ENCODE measurements at regions of chr12 and their contacts with region 1.

Region 1: DNA sequence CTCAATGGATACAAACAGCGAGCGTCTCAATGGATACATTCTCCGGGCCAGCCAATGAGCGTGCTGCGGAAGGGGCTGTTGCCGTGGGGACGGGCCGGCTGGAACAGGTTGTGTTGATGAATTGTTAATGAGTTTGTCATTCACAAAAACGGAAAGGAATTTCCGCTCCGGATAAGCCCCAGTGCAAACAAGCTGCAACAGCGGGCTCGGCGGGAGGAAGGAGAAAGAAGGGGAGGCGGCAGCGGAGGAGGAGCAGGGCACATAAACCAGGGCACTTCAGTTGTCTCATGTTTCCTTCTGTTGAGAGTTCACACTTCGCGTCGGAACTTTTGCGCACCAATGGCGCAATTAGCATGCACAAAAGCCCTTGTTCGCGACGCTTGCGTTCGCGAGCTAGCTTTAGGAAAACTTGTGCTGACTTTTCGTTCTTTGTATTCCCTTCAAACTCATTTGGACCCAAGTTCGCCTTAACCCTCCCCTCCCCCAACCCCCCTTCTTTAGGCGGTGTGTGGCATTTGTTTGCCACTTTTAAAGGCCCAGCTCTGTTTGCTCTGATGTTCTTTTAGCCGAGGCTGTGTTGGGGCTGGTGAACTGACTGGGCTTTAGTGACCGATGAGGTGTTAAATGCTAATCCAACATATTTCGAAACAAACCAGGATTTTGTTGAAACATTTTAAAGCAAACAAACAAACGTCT is at the start of gene DUSP6:
- DNase-seq: peak; percentile 98
- H3K4me3 Mint-ChIP-seq: peak within 1 kb of the TSS; percentile 98
- H3K27ac Mint-ChIP-seq: peak within 1 kb of the TSS; percentile 93
- H3K4me1 Mint-ChIP-seq: peaks cover 44% of the 10 kb centered on the region
- H3K27me3 Mint-ChIP-seq: no peaks in the 10 kb centered on the region
- total RNA-seq, gene DUSP6: 95.5 and 96.7 TPM in 2 replicates

Region 2: GRCh38 chr12:89051065-89051677 is 301.5 kb before region 1 on chr12:
- intact Hi-C with region 1: loop called (anchors 1 kb)
- DNase-seq: peak; percentile 82
- H3K4me3 Mint-ChIP-seq: no peak overlapping the region
- H3K27ac Mint-ChIP-seq: no peak overlapping the region
- H3K4me1 Mint-ChIP-seq: peaks cover 24% of the 10 kb centered on the region
- H3K27me3 Mint-ChIP-seq: no peaks in the 10 kb centered on the region

Region 3: DNA sequence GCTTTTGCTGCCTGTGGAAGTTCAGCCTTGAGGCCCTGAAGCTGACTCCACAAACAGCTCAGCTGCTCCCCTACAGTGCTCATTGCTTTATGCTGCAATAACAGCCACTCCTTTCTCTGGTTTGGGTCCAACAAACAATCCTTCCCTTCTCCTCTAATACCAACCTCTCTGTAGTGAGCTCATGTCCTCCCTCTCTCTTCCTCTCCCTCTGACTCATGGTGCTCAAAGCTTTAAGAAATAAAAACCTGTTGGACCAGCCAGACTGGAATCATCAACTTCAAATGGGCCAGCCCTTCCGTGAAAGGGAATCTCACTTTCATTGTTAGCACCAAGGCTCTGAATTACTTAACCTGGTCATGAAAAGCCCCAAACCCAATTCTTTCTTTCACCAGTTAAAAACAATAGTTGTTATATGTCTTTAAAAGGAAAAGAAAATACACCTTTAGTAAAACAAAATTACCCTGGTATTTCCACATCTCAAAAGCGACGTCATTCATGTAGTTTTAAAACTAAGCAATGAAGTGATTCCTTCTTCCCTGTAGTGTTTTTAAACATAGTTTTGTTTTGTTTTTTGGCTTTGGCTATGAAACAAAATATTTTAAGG is 126.7 kb before region 1 on chr12:
- intact Hi-C with region 1: loop called (anchors 1 kb)
- DNase-seq: peak; percentile 75
- H3K4me3 Mint-ChIP-seq: peak overlapping the region; percentile 58
- H3K27ac Mint-ChIP-seq: peak overlapping the region; percentile 95
- H3K4me1 Mint-ChIP-seq: peaks cover 67% of the 10 kb centered on the region
- H3K27me3 Mint-ChIP-seq: no peaks in the 10 kb centered on the region

Region 4: GRCh38 chr12:89250636-89251035 is 102.0 kb before region 1 on chr12:
- intact Hi-C with region 1: no loop called
- DNase-seq: no peak
- H3K4me3 Mint-ChIP-seq: no peak overlapping the region
- H3K27ac Mint-ChIP-seq: no peak overlapping the region
- H3K4me1 Mint-ChIP-seq: peaks cover 37% of the 10 kb centered on the region
- H3K27me3 Mint-ChIP-seq: no peaks in the 10 kb centered on the region

Region 5: GRCh38 chr12:89373763-89374572 is 21.3 kb after region 1 on chr12:
- intact Hi-C with region 1: loop called (anchors 1 kb)
- DNase-seq: no peak
- H3K4me3 Mint-ChIP-seq: no peak overlapping the region
- H3K27ac Mint-ChIP-seq: no peak overlapping the region
- H3K4me1 Mint-ChIP-seq: peaks cover 38% of the 10 kb centered on the region
- H3K27me3 Mint-ChIP-seq: no peaks in the 10 kb centered on the region

Region 6: DNA sequence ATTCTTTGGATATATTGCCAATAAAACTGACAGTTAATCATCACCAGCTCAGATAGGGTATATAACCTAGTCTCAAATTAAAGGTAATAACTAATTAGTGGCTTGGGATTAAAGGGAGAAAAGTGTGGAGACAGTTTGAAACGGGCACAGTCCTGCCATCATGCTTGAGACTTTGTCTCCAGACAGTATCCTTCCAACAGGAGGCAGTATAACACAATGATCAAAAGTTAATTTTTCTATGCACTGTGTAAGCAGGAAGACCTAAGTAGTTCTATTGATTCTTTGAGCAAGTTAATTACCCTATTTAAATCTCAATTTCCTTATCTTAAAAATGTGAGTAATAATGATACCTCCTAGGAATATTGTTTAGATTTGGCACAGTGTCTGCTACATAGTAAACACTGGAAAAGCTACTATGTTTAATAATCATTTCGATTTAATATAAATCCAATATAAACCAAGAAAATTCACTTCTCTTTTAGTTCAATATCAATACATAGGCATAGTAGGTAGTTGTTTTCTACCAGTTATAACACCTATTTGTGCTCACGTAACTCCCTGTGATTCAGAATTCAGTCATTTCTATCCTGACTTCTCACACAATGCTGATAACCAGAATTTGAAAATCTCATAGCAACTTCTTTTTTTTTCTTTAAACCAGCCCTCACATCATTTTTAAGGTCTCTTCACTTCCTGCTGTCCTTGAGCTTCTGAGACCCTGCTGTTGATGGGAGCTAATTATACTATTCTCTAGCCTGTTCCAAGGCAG is 118.3 kb after region 1 on chr12:
- intact Hi-C with region 1: loop called (anchors 2 kb)
- DNase-seq: peak; percentile 73
- H3K4me3 Mint-ChIP-seq: no peak overlapping the region
- H3K27ac Mint-ChIP-seq: peak overlapping the region; percentile 22
- H3K4me1 Mint-ChIP-seq: peaks cover 60% of the 10 kb centered on the region
- H3K27me3 Mint-ChIP-seq: no peaks in the 10 kb centered on the region

Region 7: DNA sequence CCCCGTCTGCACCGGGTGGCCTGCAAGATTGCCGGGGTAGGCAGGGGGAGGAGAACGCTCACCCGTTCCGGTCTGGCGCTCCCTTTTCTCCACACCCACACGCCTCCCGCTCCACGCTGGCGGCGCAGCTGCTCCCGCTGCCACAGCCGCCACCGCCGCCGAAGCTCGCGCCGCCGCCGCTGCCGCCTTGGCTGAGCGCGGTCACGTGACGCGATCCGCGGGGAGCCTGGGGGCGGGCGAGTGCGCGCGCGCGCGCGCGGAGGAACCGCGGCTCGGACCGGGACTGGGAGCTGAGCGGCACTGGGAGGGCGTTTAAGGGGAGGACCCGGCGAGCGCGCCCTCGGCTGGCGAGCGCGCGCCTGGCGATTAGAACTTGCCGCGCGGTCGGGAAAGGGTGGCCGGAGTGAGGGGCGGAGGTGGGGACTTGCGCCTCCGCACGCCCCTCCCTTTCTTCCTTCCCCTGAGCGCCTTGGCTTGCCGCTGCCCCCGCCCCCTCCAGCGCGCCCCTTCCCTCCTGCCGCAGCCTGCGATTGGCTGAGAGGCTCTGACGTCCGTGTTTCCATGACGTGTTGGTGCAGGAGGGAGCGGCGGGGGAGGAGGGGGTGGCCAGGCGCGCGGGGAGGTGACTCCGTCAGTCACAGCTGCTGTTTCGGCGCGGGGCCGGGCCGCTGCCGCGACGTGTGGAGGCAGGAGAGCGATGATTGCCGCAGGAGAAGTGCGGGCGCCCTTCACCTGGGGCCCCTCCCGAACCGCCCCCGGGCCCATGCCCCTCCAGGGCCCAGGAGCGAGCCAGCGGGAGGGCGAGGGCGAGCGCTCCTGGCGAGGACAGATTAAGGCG is 356.7 kb after region 1 on chr12:
- intact Hi-C with region 1: loop called (anchors 2 kb)
- DNase-seq: peak; percentile 99
- H3K4me3 Mint-ChIP-seq: peak overlapping the region; percentile 84
- H3K27ac Mint-ChIP-seq: peak overlapping the region; percentile 87
- H3K4me1 Mint-ChIP-seq: peaks cover 28% of the 10 kb centered on the region
- H3K27me3 Mint-ChIP-seq: peaks cover 33% of the 10 kb centered on the region

Region 8: GRCh38 chr12:89721291-89721987 is 368.8 kb after region 1 on chr12:
- intact Hi-C with region 1: no loop called
- DNase-seq: no peak
- H3K4me3 Mint-ChIP-seq: no peak overlapping the region
- H3K27ac Mint-ChIP-seq: no peak overlapping the region
- H3K4me1 Mint-ChIP-seq: no peaks in the 10 kb centered on the region
- H3K27me3 Mint-ChIP-seq: no peaks in the 10 kb centered on the region

Measured in activated CD4-positive, alpha-beta T cell treated with anti-CD3 and anti-CD28 coated beads, Interleukin-2, amount 10 ng/mL, durations not matched to agents 24 days and 14 days (primary cell).